ENCODE measurements at regions of chr13 and their contacts with region 1.

Region 1: GRCh38 chr13:78121459-78122348 is 203.1 kb upstream of the EDNRB start:
- DNase-seq: no peak
- ATAC-seq: peak; percentile 83
- H3K4me3 ChIP-seq: no peak overlapping the region
- H3K27ac ChIP-seq: no peak overlapping the region
- H3K4me1 ChIP-seq: no peaks in the 10 kb centered on the region
- H3K27me3 ChIP-seq: no peaks in the 10 kb centered on the region
- CTCF ChIP-seq: peak; percentile 91

Region 2: DNA sequence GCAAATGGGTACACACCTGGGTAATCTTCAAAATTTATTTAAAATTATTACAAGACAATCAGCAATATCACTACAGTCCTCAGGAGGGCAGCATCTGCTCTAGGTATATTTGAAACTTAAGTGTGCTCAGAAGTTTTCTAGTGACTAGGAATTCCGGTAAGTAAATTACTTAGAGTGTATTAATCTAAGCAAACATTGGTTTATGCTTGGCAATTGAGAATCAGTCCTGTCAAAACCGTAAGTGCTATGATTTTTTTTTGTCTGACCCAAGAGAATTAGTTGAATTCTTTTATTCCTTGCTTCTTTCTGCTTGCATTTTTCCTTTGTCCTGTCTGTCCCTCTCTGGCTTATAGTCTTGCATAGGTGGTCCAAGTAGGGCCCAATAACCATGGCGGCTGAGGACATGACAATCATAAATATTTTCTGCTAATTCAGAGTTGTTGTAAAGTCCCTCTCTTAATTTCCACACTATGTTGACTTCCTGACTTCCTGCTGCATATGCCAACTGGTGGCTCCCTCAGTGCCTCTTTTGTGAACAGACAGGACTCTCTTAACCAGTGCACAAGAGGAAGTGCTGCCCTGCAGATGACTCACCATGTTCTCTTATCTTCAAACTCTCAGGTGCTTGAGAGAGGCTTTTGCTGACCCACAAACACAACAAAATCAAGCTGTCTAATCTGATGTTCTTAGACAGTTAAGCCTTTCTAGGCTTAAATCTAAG is 342.0 kb before region 1 on chr13:
- intact Hi-C with region 1: loop called (anchors 5 kb)
- DNase-seq: no peak
- ATAC-seq: peak; percentile 91
- H3K4me3 ChIP-seq: no peak overlapping the region
- H3K27ac ChIP-seq: peak overlapping the region; percentile 63
- H3K4me1 ChIP-seq: peaks cover 5% of the 10 kb centered on the region
- H3K27me3 ChIP-seq: no peaks in the 10 kb centered on the region
- CTCF ChIP-seq: peak; percentile 72

Measured in upper lobe of right lung (tissue), 1 donor.